ENCODE measurements at regions of chr12 and their contacts with region 1.

Region 1: GRCh38 chr12:56333679-56334489 is at the start of gene PAN2:
- DNase-seq: peak; percentile 85
- ATAC-seq: peak; percentile 91
- H3K4me3 Mint-ChIP-seq: peak within 1 kb of the TSS; percentile 96
- H3K27ac Mint-ChIP-seq: peak within 1 kb of the TSS; percentile 100
- H3K4me1 Mint-ChIP-seq: peaks cover 46% of the 10 kb centered on the region
- H3K27me3 Mint-ChIP-seq: no peaks in the 10 kb centered on the region
- CTCF ChIP-seq: no peak
- total RNA-seq, gene PAN2: 86.3 and 98.9 TPM in 2 replicates

Region 2: DNA sequence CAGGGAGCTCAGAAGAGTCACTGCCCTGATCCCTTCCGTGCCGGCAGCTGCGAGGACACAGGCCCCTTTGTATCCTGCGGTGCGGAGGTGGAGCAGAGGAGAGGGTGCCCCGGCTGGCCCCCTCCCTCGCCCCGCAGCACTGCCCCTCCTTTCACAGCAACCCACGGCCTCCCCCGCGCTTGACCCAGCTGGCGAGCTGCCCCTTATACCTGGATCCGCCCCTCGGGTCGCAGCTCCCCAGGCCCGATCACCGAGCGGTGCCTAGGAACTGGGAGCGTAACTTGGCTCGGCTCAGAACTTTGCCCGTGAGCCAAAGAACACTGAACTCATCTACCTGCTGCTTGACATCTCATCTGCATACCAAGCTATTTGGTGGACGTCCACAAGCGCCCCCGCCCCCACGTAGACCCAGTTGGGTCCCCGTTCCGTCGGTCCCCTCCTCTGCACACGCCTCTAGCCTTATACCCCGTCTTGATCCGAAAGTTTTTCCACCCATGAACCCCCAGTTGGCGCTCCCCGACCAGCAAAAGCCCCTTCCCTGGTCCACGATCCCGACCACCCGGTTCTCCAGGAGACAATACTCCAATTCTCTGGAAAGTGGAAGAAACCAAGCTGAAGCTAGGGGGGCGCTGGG is 503.8 kb before region 1 on chr12:
- CTCF ChIA-PET with region 1: no interaction called
- POLR2A ChIA-PET with region 1: no interaction called
- intact Hi-C with region 1: no loop called
- DNase-seq: peak; percentile 32
- ATAC-seq: peak; percentile 13
- H3K4me3 Mint-ChIP-seq: peak overlapping the region; percentile 97
- H3K27ac Mint-ChIP-seq: peak overlapping the region; percentile 91
- H3K4me1 Mint-ChIP-seq: peaks cover 51% of the 10 kb centered on the region
- H3K27me3 Mint-ChIP-seq: no peaks in the 10 kb centered on the region
- CTCF ChIP-seq: no peak

Region 3: DNA sequence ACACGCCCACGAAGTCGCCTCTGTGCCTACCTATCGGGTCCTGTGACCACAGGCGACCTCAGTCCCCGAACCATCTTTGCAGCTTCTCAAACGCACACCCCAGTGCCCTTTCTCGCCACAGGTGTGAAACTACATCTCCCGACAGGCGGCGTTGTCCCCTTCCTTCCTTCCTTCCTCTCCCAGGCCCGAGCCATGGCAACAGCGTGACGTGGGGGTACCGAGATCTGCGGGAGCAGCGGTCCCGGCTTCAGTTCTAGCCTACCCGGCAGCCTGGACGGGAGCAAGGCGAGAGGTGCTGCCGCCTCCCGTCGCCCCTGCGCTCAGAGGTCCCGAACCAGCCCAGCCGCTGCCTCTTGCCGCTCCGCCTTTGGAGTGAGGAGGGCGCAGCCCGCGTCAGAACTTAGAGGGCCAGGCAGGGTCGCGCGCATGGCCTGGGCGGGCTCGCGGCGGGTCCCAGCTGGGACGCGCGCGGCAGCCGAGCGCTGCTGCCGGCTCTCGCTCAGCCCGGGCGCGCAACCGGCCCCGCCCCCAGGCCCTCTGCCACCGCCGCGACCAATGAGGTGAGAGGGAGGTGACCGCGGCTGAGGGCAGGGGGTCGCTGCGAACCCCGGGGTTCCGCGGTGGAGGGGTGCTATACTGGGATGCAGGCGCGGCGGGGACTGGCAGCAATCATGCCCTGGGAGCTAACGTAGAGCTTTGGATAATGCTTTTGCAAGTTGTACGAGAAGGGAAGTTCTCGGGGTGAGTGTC is 67.0 kb before region 1 on chr12 and contains the start of gene COQ10A:
- CTCF ChIA-PET with region 1: no interaction called
- POLR2A ChIA-PET with region 1: interaction called, 14 read pairs
- intact Hi-C with region 1: loop called (anchors 2 kb)
- DNase-seq: peak; percentile 90
- ATAC-seq: peak; percentile 90
- H3K4me3 Mint-ChIP-seq: peak within 1 kb of the TSS; percentile 93
- H3K27ac Mint-ChIP-seq: peak within 1 kb of the TSS; percentile 93
- H3K4me1 Mint-ChIP-seq: peaks cover 18% of the 10 kb centered on the region
- H3K27me3 Mint-ChIP-seq: no peaks in the 10 kb centered on the region
- CTCF ChIP-seq: no peak
- total RNA-seq, gene COQ10A: 30.2 and 35.6 TPM in 2 replicates

Region 4: GRCh38 chr12:56346703-56347102 is 12.8 kb after region 1 on chr12:
- CTCF ChIA-PET with region 1: no interaction called
- POLR2A ChIA-PET with region 1: interaction called, 10 read pairs
- intact Hi-C with region 1: no loop called
- DNase-seq: no peak
- ATAC-seq: no peak
- H3K4me3 Mint-ChIP-seq: no peak overlapping the region
- H3K27ac Mint-ChIP-seq: no peak overlapping the region
- H3K4me1 Mint-ChIP-seq: no peaks in the 10 kb centered on the region
- H3K27me3 Mint-ChIP-seq: no peaks in the 10 kb centered on the region
- CTCF ChIP-seq: no peak

Region 5: DNA sequence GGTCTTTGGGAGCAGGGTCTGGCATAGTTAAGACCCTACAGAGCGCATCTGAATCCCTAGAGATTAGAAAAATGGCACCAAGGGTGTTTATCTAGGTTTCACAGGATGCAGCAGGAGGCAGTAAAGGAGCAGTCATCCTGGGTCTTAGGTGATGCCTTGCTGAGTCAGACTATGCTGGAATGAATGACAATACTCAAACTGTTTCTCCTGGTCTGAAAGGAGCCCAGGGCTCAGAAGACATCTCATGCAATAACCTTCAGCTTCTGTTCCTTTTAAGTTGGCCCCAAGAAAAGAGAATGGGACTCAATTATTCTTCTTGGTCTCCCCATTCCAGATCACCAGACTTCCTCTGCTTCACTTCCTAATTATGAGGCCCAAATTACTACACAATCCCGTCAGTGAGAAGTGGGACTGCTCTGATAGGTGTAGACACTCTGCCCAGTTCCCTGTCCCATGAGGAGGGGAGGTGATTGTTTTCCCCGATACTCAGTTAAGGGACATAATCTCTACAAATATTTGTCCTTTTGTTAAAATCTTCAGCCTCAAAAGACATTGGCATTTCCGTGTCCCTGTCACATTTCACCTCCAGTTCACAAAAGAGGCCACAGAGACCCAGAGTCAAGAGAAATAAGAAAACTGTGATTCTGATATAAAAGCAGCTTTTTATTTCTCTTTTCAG is 43.6 kb after region 1 on chr12:
- CTCF ChIA-PET with region 1: no interaction called
- POLR2A ChIA-PET with region 1: interaction called, 32 read pairs
- intact Hi-C with region 1: loop called (anchors 1 kb)
- DNase-seq: no peak
- ATAC-seq: no peak
- H3K4me3 Mint-ChIP-seq: no peak overlapping the region
- H3K27ac Mint-ChIP-seq: peak overlapping the region; percentile 94
- H3K4me1 Mint-ChIP-seq: peaks cover 53% of the 10 kb centered on the region
- H3K27me3 Mint-ChIP-seq: no peaks in the 10 kb centered on the region
- CTCF ChIP-seq: no peak

Region 6: GRCh38 chr12:56476972-56477432 is 143.1 kb after region 1 on chr12:
- CTCF ChIA-PET with region 1: no interaction called
- POLR2A ChIA-PET with region 1: interaction called, 11 read pairs
- intact Hi-C with region 1: no loop called
- DNase-seq: no peak
- ATAC-seq: no peak
- H3K4me3 Mint-ChIP-seq: no peak overlapping the region
- H3K27ac Mint-ChIP-seq: no peak overlapping the region
- H3K4me1 Mint-ChIP-seq: peaks cover 11% of the 10 kb centered on the region
- H3K27me3 Mint-ChIP-seq: no peaks in the 10 kb centered on the region
- CTCF ChIP-seq: no peak